Activated T-helper 2 cell treated with anti-CD3 and anti-CD28 coated beads, Interferon-gamma antibody, Interleukin-2, Interleukin-4, amounts not matched to agents 10 μg/mL and 5 μg/mL and 100 μg/mL, durations not matched to agents 14 hours and 24 hours and 36 hours (primary cell): ENCODE measurements at regions of chr3 and their contacts with region 1.

Region 1: GRCh38 chr3:101936419-101937356 is 87.4 kb downstream of the NFKBIZ start:
- DNase-seq: peak; percentile 18
- H3K4me3 Mint-ChIP-seq: peak overlapping the region; percentile 46
- H3K27ac Mint-ChIP-seq: peak overlapping the region; percentile 71
- H3K4me1 Mint-ChIP-seq: peaks cover 33% of the 10 kb centered on the region
- H3K27me3 Mint-ChIP-seq: peaks cover 16% of the 10 kb centered on the region

Region 2: GRCh38 chr3:101809178-101810021 is 127.3 kb before region 1 on chr3:
- intact Hi-C with region 1: loop called (anchors 5 kb)
- DNase-seq: no peak
- H3K4me3 Mint-ChIP-seq: no peak overlapping the region
- H3K27ac Mint-ChIP-seq: peak overlapping the region; percentile 48
- H3K4me1 Mint-ChIP-seq: peaks cover 51% of the 10 kb centered on the region
- H3K27me3 Mint-ChIP-seq: no peaks in the 10 kb centered on the region

Region 3: DNA sequence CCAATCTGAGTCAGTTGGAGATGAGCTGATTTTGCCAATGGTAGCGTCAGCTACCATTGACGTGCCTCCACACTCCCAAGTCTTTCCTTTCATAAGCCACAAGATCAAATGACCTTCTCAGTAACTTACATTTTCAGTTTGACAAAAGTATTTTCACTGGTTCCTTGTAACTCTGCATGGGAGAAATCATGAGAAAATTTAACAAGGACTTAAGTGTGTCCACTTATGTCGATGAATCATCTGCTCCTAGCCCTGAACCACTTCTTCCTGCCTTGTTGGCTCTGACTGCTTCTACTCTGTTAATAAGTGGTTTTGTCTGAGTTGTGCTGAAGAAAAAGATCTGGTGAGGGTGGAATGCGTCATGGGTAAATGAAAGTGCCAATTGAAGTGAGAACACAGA is 13.8 kb after region 1 on chr3:
- intact Hi-C with region 1: loop called (anchors 1 kb)
- DNase-seq: no peak
- H3K4me3 Mint-ChIP-seq: no peak overlapping the region
- H3K27ac Mint-ChIP-seq: peak overlapping the region; percentile 53
- H3K4me1 Mint-ChIP-seq: peaks cover 26% of the 10 kb centered on the region
- H3K27me3 Mint-ChIP-seq: no peaks in the 10 kb centered on the region

Region 4: DNA sequence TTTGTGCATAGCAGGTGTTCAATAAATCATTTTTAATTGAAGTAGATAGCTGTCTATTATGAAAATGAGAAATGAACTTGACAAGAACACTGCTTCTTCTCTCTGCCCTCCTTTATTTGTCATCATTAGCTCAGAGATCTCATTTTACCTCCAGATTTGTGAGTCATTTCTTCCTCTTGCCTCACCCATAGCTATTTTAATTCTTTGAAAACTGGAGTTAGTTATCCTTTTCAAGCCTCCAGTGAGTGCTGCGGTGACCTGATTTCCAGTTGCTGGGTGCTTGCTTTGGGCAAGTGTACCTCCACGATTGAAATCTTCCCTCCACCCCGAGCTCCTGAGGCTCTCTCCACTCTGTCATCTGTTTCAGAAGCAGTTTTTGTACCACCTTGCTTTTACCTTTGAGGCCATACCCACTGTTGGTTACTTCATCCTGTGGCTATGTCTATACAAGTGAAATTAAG is 27.2 kb after region 1 on chr3:
- intact Hi-C with region 1: no loop called
- DNase-seq: no peak
- H3K4me3 Mint-ChIP-seq: no peak overlapping the region
- H3K27ac Mint-ChIP-seq: peak overlapping the region; percentile 1
- H3K4me1 Mint-ChIP-seq: peaks cover 27% of the 10 kb centered on the region
- H3K27me3 Mint-ChIP-seq: peaks cover 1% of the 10 kb centered on the region

Region 5: GRCh38 chr3:101995371-101996046 is 58.8 kb after region 1 on chr3:
- intact Hi-C with region 1: loop called (anchors 1 kb)
- DNase-seq: no peak
- H3K4me3 Mint-ChIP-seq: peak overlapping the region; percentile 24
- H3K27ac Mint-ChIP-seq: peak overlapping the region; percentile 83
- H3K4me1 Mint-ChIP-seq: peaks cover 63% of the 10 kb centered on the region
- H3K27me3 Mint-ChIP-seq: peaks cover 2% of the 10 kb centered on the region

Region 6: GRCh38 chr3:102006812-102007485 is 70.3 kb after region 1 on chr3:
- intact Hi-C with region 1: no loop called
- DNase-seq: no peak
- H3K4me3 Mint-ChIP-seq: no peak overlapping the region
- H3K27ac Mint-ChIP-seq: no peak overlapping the region
- H3K4me1 Mint-ChIP-seq: peaks cover 11% of the 10 kb centered on the region
- H3K27me3 Mint-ChIP-seq: peaks cover 5% of the 10 kb centered on the region

Region 7: GRCh38 chr3:102229062-102229655 is 292.5 kb after region 1 on chr3:
- intact Hi-C with region 1: loop called (anchors 5 kb)
- DNase-seq: peak; percentile 62
- H3K4me3 Mint-ChIP-seq: no peak overlapping the region
- H3K27ac Mint-ChIP-seq: no peak overlapping the region
- H3K4me1 Mint-ChIP-seq: peaks cover 23% of the 10 kb centered on the region
- H3K27me3 Mint-ChIP-seq: peaks cover 23% of the 10 kb centered on the region